B cell (primary cell): ENCODE measurements at regions of chr16 and their contacts with region 1.

Region 1: GRCh38 chr16:88430524-88431446 is 22.3 kb upstream of the ZFPM1 start:
- DNase-seq: peak; percentile 75
- ATAC-seq: peak; percentile 68
- H3K4me3 ChIP-seq: peak overlapping the region in 4 of 5 experiments; percentile 51 to 70 (median 58)
- H3K4me3 Mint-ChIP-seq: peak overlapping the region; percentile 84
- H3K27ac ChIP-seq: peak overlapping the region; percentile 44 to 89
- H3K27ac Mint-ChIP-seq: peak overlapping the region; percentile 82
- H3K4me1 ChIP-seq: peaks cover 15 to 17% of the 10 kb centered on the region in 2 donors
- H3K4me1 Mint-ChIP-seq: peaks cover 10% of the 10 kb centered on the region
- H3K27me3 ChIP-seq: no peaks in the 10 kb centered on the region
- H3K27me3 Mint-ChIP-seq: no peaks in the 10 kb centered on the region
- CTCF ChIP-seq: no peak

Region 2: GRCh38 chr16:88026964-88027938 is 403.5 kb before region 1 on chr16:
- CTCF ChIA-PET with region 1: no interaction called
- POLR2A ChIA-PET with region 1: no interaction called
- intact Hi-C with region 1: loop called (anchors 5 kb)
- DNase-seq: no peak
- ATAC-seq: no peak
- H3K4me3 ChIP-seq: no peak overlapping the region
- H3K4me3 Mint-ChIP-seq: no peak overlapping the region
- H3K27ac ChIP-seq: no peak overlapping the region
- H3K27ac Mint-ChIP-seq: no peak overlapping the region
- H3K4me1 ChIP-seq: no peaks in the 10 kb centered on the region
- H3K4me1 Mint-ChIP-seq: peaks cover 9% of the 10 kb centered on the region
- H3K27me3 ChIP-seq: no peaks in the 10 kb centered on the region
- H3K27me3 Mint-ChIP-seq: no peaks in the 10 kb centered on the region
- CTCF ChIP-seq: no peak